ENCODE measurements at regions of chrX and their contacts with region 1.

Region 1: DNA sequence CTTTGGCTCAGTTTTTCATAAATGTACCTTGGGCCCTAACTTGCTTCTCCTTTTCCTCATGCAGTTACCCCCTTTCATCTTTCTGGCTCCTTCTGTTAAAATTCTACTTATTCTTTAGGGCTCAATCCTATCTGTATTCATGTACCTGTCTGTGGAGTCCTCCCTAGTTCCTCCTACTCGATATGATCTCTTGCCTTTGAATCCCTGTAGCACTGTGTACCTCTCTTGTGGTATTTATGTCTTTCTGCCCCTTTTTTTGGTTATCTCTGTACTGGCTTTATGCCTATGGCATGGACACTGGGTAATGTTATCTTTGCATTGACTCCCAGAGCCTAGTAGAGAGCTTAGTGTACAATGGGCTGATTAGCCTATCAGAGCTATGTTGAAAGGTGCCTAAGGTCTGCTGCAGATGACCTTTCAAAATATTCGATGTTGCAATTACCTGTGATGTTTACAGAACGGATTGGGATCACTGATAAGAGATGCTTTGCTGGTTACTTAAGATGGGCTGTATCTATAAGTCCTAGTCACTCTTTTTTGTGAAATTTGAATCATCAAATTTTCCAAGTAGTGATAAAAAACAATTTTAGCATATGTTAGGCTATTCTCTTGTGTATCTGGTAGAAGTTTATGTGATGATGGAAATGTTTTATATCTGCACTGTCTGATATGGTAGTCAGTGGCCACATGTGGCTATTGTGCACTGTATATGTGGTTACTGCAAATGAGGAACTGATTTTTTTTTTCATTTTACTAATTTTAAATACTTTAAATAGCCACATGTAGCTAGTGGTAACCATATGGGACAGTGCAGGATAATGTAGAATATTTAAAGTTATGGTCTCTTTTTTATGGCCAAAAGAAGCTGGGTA is 33.5 kb downstream of the TMEM164 start:
- DNase-seq: peak; percentile 60 to 66
- H3K4me3 ChIP-seq: no peak overlapping the region
- H3K4me3 Mint-ChIP-seq: peak overlapping the region; percentile 31
- H3K27ac Mint-ChIP-seq: peak overlapping the region; percentile 44
- H3K4me1 ChIP-seq: peaks cover 17% of the 10 kb centered on the region
- H3K4me1 Mint-ChIP-seq: peaks cover 20% of the 10 kb centered on the region
- H3K27me3 ChIP-seq: no peaks in the 10 kb centered on the region
- H3K27me3 Mint-ChIP-seq: no peaks in the 10 kb centered on the region
- CTCF ChIP-seq: no peak

Region 2: GRCh38 chrX:110002300-110003166 is 33.9 kb before region 1 on chrX and contains the start of gene TMEM164:
- CTCF ChIA-PET with region 1: no interaction called
- POLR2A ChIA-PET with region 1: no interaction called
- intact Hi-C with region 1: loop called (anchors 2 kb)
- DNase-seq: peak; percentile 76 to 79
- H3K4me3 ChIP-seq: peak within 1 kb of the TSS; percentile 77
- H3K4me3 Mint-ChIP-seq: peak within 1 kb of the TSS; percentile 97
- H3K27ac Mint-ChIP-seq: peak within 1 kb of the TSS; percentile 84
- H3K4me1 ChIP-seq: no peaks in the 10 kb centered on the region
- H3K4me1 Mint-ChIP-seq: peaks cover 7% of the 10 kb centered on the region
- H3K27me3 ChIP-seq: no peaks in the 10 kb centered on the region
- H3K27me3 Mint-ChIP-seq: no peaks in the 10 kb centered on the region
- CTCF ChIP-seq: no peak
- total RNA-seq, gene TMEM164: 25.6 and 26.2 TPM in 2 replicates

Region 3: GRCh38 chrX:110012834-110013485 is 23.4 kb before region 1 on chrX:
- CTCF ChIA-PET with region 1: no interaction called
- POLR2A ChIA-PET with region 1: no interaction called
- intact Hi-C with region 1: no loop called
- DNase-seq: no peak
- H3K4me3 ChIP-seq: no peak overlapping the region
- H3K4me3 Mint-ChIP-seq: no peak overlapping the region
- H3K27ac Mint-ChIP-seq: no peak overlapping the region
- H3K4me1 ChIP-seq: no peaks in the 10 kb centered on the region
- H3K4me1 Mint-ChIP-seq: no peaks in the 10 kb centered on the region
- H3K27me3 ChIP-seq: no peaks in the 10 kb centered on the region
- H3K27me3 Mint-ChIP-seq: no peaks in the 10 kb centered on the region
- CTCF ChIP-seq: no peak

Region 4: GRCh38 chrX:110086916-110087484 is 50.6 kb after region 1 on chrX:
- CTCF ChIA-PET with region 1: no interaction called
- POLR2A ChIA-PET with region 1: no interaction called
- intact Hi-C with region 1: loop called (anchors 5 kb)
- DNase-seq: peak in 1 of 2 experiments; percentile 33
- H3K4me3 ChIP-seq: no peak overlapping the region
- H3K4me3 Mint-ChIP-seq: no peak overlapping the region
- H3K27ac Mint-ChIP-seq: peak overlapping the region; percentile 36
- H3K4me1 ChIP-seq: peaks cover 23% of the 10 kb centered on the region
- H3K4me1 Mint-ChIP-seq: no peaks in the 10 kb centered on the region
- H3K27me3 ChIP-seq: no peaks in the 10 kb centered on the region
- H3K27me3 Mint-ChIP-seq: no peaks in the 10 kb centered on the region
- CTCF ChIP-seq: no peak

Region 5: GRCh38 chrX:110133735-110134370 is 97.5 kb after region 1 on chrX:
- CTCF ChIA-PET with region 1: no interaction called
- POLR2A ChIA-PET with region 1: no interaction called
- intact Hi-C with region 1: no loop called
- DNase-seq: no peak
- H3K4me3 ChIP-seq: no peak overlapping the region
- H3K4me3 Mint-ChIP-seq: no peak overlapping the region
- H3K27ac Mint-ChIP-seq: no peak overlapping the region
- H3K4me1 ChIP-seq: no peaks in the 10 kb centered on the region
- H3K4me1 Mint-ChIP-seq: no peaks in the 10 kb centered on the region
- H3K27me3 ChIP-seq: no peaks in the 10 kb centered on the region
- H3K27me3 Mint-ChIP-seq: no peaks in the 10 kb centered on the region
- CTCF ChIP-seq: no peak

Region 6: GRCh38 chrX:110734894-110735541 is 698.6 kb after region 1 on chrX:
- CTCF ChIA-PET with region 1: no interaction called
- POLR2A ChIA-PET with region 1: no interaction called
- intact Hi-C with region 1: no loop called
- DNase-seq: no peak
- H3K4me3 ChIP-seq: no peak overlapping the region
- H3K4me3 Mint-ChIP-seq: no peak overlapping the region
- H3K27ac Mint-ChIP-seq: no peak overlapping the region
- H3K4me1 ChIP-seq: no peaks in the 10 kb centered on the region
- H3K4me1 Mint-ChIP-seq: no peaks in the 10 kb centered on the region
- H3K27me3 ChIP-seq: no peaks in the 10 kb centered on the region
- H3K27me3 Mint-ChIP-seq: peaks cover 2% of the 10 kb centered on the region
- CTCF ChIP-seq: no peak